Activated naive CD4-positive, alpha-beta T cell treated with anti-CD3 and anti-CD28 coated beads for 36 hours (primary cell): ENCODE measurements at regions of chr19 and their contacts with region 1.

Region 1: GRCh38 chr19:16076154-16076957 is at the start of gene TPM4:
- DNase-seq: peak; percentile 93
- H3K4me3 Mint-ChIP-seq: peak within 1 kb of the TSS; percentile 81
- H3K27ac Mint-ChIP-seq: peak within 1 kb of the TSS; percentile 98
- H3K4me1 Mint-ChIP-seq: peaks cover 65% of the 10 kb centered on the region
- H3K27me3 Mint-ChIP-seq: no peaks in the 10 kb centered on the region
- total RNA-seq, gene TPM4: 240 to 254 TPM

Region 2: DNA sequence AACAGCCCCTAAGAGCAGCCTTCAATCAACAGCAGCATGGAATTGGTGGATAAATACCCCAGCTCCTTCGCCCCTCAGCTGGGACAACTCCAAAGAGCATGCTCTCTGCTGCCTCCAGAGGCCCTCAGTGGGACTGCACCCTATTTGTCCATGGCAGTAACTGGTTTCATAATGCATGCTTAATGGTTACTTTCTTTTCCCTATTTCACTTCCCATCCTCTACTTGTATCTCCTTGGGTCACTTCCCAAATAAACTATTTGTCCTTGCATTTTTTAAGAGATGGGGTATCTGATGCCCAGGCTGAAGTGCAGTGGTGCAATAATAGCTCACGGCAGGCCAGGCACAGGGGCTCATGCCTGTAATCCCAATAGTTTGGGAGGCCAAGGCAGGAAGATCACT is 13.6 kb before region 1 on chr19:
- CTCF ChIA-PET with region 1: interaction called, 32 read pairs
- intact Hi-C with region 1: no loop called
- DNase-seq: peak; percentile 84
- H3K4me3 Mint-ChIP-seq: no peak overlapping the region
- H3K27ac Mint-ChIP-seq: no peak overlapping the region
- H3K4me1 Mint-ChIP-seq: peaks cover 20% of the 10 kb centered on the region
- H3K27me3 Mint-ChIP-seq: no peaks in the 10 kb centered on the region

Region 3: DNA sequence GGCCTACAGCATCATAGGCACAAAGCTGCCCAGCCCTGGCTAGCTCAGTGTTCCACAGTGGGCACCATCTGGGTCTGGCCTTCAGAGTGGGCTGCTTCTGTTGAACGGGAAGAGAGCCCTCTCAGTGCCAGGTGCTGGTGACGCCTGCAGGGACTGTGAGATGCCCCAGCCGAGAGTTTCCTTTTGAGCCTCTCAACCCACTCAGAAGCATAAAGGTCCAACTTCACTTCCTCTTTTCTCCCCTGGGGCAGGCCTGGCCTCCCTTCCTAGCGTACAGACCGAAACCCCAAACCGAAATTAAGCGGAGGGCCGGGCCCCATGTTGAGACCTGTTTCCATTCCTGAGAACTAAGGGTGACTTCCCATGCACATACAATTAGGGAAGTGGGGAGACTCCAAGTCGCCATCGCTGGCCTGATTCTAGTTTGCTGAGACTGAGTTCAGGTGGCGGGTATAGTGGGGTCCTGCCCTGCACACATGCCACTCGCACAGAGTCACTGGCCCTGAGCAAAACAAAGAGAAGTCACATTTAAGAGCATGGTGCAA is 42.2 kb after region 1 on chr19:
- CTCF ChIA-PET with region 1: interaction called, 4 read pairs
- intact Hi-C with region 1: loop called (anchors 2 kb)
- DNase-seq: peak; percentile 45
- H3K4me3 Mint-ChIP-seq: no peak overlapping the region
- H3K27ac Mint-ChIP-seq: peak overlapping the region; percentile 82
- H3K4me1 Mint-ChIP-seq: peaks cover 54% of the 10 kb centered on the region
- H3K27me3 Mint-ChIP-seq: no peaks in the 10 kb centered on the region

Region 4: DNA sequence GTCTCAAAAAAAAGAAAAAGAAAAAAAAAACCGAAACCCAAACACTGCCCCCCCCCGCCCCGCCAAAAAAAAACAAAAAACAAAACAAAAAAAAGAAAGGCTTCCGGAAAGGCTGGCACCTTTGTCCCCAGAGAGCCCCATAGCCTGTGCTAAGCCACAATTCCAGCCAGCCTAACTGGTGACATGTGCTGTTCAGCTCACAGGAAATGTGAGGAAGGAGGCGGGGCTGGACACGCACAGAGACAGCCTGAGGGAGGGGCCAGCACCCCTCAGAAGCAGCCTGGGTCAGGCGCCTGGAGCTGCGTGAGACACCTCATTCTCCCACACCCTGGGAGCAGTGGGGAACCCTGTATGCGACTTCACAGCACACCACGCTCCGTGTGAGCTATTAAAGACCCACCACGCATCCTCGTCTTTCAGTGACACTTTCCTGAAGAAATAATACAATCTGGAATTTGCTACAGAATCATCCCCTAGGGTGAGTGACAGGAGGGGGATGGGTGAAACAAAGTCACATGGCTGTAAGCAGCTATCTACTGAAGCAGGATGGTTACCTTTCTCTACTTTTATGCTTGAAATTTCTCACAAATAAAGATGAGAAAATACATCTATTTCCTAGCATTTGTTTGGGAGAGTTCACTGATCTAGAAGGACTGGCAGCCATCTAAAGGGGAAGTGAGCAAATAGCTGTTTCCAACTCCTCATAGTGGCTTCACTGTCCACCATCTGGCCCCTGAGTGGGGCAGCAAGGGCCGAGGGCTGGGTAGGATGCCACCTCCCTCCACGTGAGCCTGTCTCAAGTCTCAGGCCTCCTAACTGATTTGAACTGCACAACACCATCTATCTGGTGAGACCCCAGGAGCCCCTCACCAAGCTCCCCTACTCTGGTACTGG is 508.1 kb after region 1 on chr19:
- CTCF ChIA-PET with region 1: no interaction called
- intact Hi-C with region 1: loop called (anchors 5 kb)
- DNase-seq: peak; percentile 96
- H3K4me3 Mint-ChIP-seq: peak overlapping the region; percentile 79
- H3K27ac Mint-ChIP-seq: peak overlapping the region; percentile 82
- H3K4me1 Mint-ChIP-seq: peaks cover 79% of the 10 kb centered on the region
- H3K27me3 Mint-ChIP-seq: no peaks in the 10 kb centered on the region